Activated CD4-positive, alpha-beta T cell treated with anti-CD3 and anti-CD28 coated beads for 36 hours (primary cell): ENCODE measurements at regions of chr3 and their contacts with region 1.

Region 1: DNA sequence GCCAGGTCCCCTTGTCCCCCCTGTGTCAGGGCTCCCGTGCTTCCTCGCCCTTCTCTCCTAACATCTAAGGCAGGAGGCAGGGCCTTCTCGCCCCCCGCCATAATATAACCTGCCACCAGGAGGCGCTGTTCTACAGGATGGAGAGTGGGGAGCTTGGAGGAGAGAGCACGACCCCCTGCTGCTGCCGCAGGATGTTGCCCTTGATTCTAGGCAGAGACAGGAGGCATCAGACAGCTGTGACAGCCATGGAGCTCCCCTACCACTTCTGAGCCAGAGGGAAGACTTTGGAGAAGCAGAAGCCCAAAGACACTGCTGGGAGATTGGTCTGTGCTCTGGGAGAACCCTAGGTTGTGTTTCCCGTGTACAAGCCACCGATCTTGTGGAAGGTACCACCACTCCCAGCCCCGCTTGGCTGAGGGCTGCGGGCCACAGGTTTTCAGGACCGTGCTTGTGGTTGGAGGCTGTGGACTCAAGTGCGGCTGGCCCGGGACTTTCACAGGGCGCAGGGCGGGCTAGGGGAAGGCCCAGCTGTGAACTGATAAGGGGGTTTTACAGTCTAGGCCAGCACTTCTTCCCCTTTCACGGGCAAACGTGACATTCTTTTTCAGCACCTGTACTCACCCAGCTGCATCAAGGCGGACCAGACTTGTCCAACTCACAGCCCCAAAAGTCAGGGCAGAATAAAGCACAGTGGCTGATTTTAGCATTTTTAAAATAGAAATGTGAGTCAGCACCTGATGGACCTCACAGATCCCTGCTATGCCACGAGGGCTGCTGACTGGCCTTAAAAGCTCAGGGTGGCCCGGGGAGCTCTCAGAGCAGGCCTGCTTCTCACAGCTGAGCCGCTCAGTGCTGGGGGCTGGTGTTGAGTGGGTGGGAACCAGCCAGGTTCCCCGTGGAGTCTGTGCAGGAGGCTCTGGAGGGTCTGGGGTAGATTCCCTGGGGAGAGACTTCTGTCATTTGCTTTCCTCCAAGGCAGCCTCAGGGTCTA is 2.6 kb upstream of the TIGIT start:
- DNase-seq: peak; percentile 94
- ATAC-seq: peak; percentile 76
- H3K4me3 Mint-ChIP-seq: peak overlapping the region; percentile 51
- H3K27ac Mint-ChIP-seq: peak overlapping the region; percentile 91
- H3K4me1 Mint-ChIP-seq: peaks cover 34% of the 10 kb centered on the region
- H3K27me3 Mint-ChIP-seq: no peaks in the 10 kb centered on the region

Region 2: GRCh38 chr3:113531826-113532697 is 759.1 kb before region 1 on chr3 and contains the start of gene SIDT1:
- CTCF ChIA-PET with region 1: no interaction called
- POLR2A ChIA-PET with region 1: no interaction called
- intact Hi-C with region 1: no loop called
- DNase-seq: peak; percentile 85
- ATAC-seq: peak; percentile 78
- H3K4me3 Mint-ChIP-seq: peak within 1 kb of the TSS; percentile 89
- H3K27ac Mint-ChIP-seq: peak within 1 kb of the TSS; percentile 96
- H3K4me1 Mint-ChIP-seq: peaks cover 49% of the 10 kb centered on the region
- H3K27me3 Mint-ChIP-seq: no peaks in the 10 kb centered on the region
- total RNA-seq, gene SIDT1: 19.0 to 19.7 TPM

Region 3: GRCh38 chr3:114128826-114129465 is 162.3 kb before region 1 on chr3:
- CTCF ChIA-PET with region 1: no interaction called
- POLR2A ChIA-PET with region 1: no interaction called
- intact Hi-C with region 1: no loop called
- DNase-seq: no peak
- ATAC-seq: no peak
- H3K4me3 Mint-ChIP-seq: no peak overlapping the region
- H3K27ac Mint-ChIP-seq: peak overlapping the region; percentile 32
- H3K4me1 Mint-ChIP-seq: peaks cover 7% of the 10 kb centered on the region
- H3K27me3 Mint-ChIP-seq: peaks cover 3% of the 10 kb centered on the region

Region 4: GRCh38 chr3:114308830-114309229 is 17.6 kb after region 1 on chr3:
- CTCF ChIA-PET with region 1: interaction called, 27 read pairs
- POLR2A ChIA-PET with region 1: no interaction called
- intact Hi-C with region 1: no loop called
- DNase-seq: peak; percentile 69
- ATAC-seq: peak; percentile 75
- H3K4me3 Mint-ChIP-seq: peak overlapping the region; percentile 40
- H3K27ac Mint-ChIP-seq: peak overlapping the region; percentile 95
- H3K4me1 Mint-ChIP-seq: peaks cover 56% of the 10 kb centered on the region
- H3K27me3 Mint-ChIP-seq: no peaks in the 10 kb centered on the region

Region 5: DNA sequence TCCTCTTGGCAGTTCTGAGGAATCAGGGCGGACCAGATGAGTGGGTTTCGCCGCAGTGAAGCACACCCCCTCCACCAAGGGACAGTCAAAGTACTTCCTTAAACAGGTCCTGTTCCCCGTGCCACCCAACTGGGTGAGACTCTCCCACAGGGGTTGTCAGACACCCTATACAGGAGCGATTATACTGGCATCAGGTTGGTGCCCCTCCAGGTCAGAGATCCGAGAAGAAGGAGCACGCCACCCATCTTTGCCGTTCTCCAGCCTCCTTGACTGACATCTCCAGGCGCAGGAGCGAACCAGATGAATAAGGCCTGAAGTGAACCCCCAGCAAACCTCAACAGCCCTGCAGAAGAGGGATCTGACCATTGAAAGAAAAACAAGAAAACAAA is 964.0 kb after region 1 on chr3:
- CTCF ChIA-PET with region 1: no interaction called
- POLR2A ChIA-PET with region 1: no interaction called
- intact Hi-C with region 1: no loop called
- DNase-seq: no peak
- ATAC-seq: no peak
- H3K4me3 Mint-ChIP-seq: no peak overlapping the region
- H3K27ac Mint-ChIP-seq: no peak overlapping the region
- H3K4me1 Mint-ChIP-seq: no peaks in the 10 kb centered on the region
- H3K27me3 Mint-ChIP-seq: peaks cover 6% of the 10 kb centered on the region